ENCODE measurements at regions of chr22 and their contacts with region 1.

Region 1: GRCh38 chr22:20283674-20284066 is 15.6 kb upstream of the RTN4R start:
- DNase-seq: no peak
- H3K4me3 ChIP-seq: no peak overlapping the region
- H3K27me3 ChIP-seq: no peaks in the 10 kb centered on the region; the same call in 1 of the 2 replicates
- CTCF ChIP-seq: no peak

Region 2: GRCh38 chr22:20268279-20269012 is 15.2 kb before region 1 on chr22 and contains the start of gene RTN4R:
- CTCF ChIA-PET with region 1: interaction called, 19 read pairs
- POLR2A ChIA-PET with region 1: no interaction called
- DNase-seq: no peak
- H3K4me3 ChIP-seq: peak within 1 kb of the TSS; percentile 23
- H3K27me3 ChIP-seq: 0 out of 2 replicates have a peak, but pooled peaks cover 2% of the 10 kb centered on the region
- CTCF ChIP-seq: peak; percentile 33
- polyA plus RNA-seq, gene RTN4R: 0.40 and 0.77 TPM in 2 replicates

Region 3: GRCh38 chr22:20295262-20296064 is 11.8 kb after region 1 on chr22:
- CTCF ChIA-PET with region 1: interaction called, 13 read pairs
- POLR2A ChIA-PET with region 1: no interaction called
- DNase-seq: no peak
- H3K4me3 ChIP-seq: no peak overlapping the region
- H3K27me3 ChIP-seq: peaks cover 7% of the 10 kb centered on the region
- CTCF ChIP-seq: no peak

Measured in BJ (cell line).